AG04450 (cell line): ENCODE measurements at regions of chr5 and their contacts with region 1.

Region 1: GRCh38 chr5:147481874-147482705 is 27.8 kb downstream of the DPYSL3 start:
- DNase-seq: no peak
- H3K4me3 ChIP-seq: no peak overlapping the region
- H3K27ac ChIP-seq: peak overlapping the region; percentile 73
- H3K27me3 ChIP-seq: no peaks in the 10 kb centered on the region
- CTCF ChIP-seq: no peak

Region 2: DNA sequence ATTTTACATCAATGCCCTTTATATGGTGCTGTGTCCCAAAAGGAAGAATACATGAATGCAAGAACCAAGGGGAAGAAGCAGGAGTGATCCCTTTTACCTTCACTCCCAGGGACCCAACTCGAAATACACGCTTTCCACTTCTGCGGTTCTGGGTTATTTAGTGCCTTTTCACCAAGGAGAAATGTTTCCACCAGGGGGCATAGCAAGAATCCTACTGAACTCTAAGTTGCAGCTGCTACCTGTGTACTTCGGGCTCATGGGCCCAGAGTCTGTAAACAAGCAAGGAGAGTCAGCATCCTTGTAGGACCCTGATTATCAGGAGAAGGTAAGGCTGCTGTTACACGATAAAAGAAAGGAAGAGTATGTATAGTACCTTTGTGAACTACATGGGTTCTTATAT is 17.9 kb before region 1 on chr5:
- CTCF ChIA-PET with region 1: interaction called, 21 read pairs
- POLR2A ChIA-PET with region 1: interaction called, 8 read pairs
- DNase-seq: no peak
- H3K4me3 ChIP-seq: no peak overlapping the region
- H3K27ac ChIP-seq: no peak overlapping the region
- H3K27me3 ChIP-seq: no peaks in the 10 kb centered on the region
- CTCF ChIP-seq: peak; percentile 54

Region 3: DNA sequence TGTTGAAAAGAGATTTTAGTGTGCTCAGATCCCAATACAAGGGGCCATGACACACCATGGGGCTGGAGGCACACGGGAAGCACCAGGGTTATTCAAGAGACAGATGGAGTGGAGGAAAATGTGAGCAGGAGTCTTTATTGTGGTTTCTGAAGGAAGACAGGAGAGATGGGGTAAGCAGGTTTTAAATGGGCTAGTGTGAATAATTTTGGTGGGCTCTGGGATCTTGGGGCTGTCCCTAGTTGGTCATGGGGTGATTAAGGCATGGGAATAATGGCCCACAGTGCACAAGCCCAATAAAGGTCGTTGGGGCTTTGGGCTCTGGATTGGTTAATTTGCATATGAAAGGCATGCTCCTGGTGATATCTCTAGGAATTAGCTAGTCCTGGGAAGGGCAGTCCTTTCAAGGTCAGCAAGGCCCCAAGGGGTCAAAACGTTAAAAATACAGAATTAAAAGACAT is 392.8 kb after region 1 on chr5:
- CTCF ChIA-PET with region 1: no interaction called
- POLR2A ChIA-PET with region 1: no interaction called
- DNase-seq: no peak
- H3K4me3 ChIP-seq: no peak overlapping the region
- H3K27ac ChIP-seq: no peak overlapping the region
- H3K27me3 ChIP-seq: no peaks in the 10 kb centered on the region
- CTCF ChIP-seq: no peak